Activated T-helper 1 cell treated with anti-CD3 and anti-CD28 coated beads, Interleukin-12 subunit alpha, Interleukin-12 subunit beta, Interleukin-2, Interleukin-4 antibody, amounts not matched to agents 30 ng/mL and 10 ng/mL and 1 ng/mL, durations not matched to agents 14 hours and 24 hours and 36 hours (primary cell): ENCODE measurements at regions of chr4 and their contacts with region 1.

Region 1: GRCh38 chr4:3346146-3346545 is 53.3 kb downstream of the RGS12 start:
- DNase-seq: no peak
- H3K4me3 Mint-ChIP-seq: no peak overlapping the region
- H3K27ac Mint-ChIP-seq: no peak overlapping the region
- H3K4me1 Mint-ChIP-seq: peaks cover 4% of the 10 kb centered on the region
- H3K27me3 Mint-ChIP-seq: peaks cover 5% of the 10 kb centered on the region

Region 2: DNA sequence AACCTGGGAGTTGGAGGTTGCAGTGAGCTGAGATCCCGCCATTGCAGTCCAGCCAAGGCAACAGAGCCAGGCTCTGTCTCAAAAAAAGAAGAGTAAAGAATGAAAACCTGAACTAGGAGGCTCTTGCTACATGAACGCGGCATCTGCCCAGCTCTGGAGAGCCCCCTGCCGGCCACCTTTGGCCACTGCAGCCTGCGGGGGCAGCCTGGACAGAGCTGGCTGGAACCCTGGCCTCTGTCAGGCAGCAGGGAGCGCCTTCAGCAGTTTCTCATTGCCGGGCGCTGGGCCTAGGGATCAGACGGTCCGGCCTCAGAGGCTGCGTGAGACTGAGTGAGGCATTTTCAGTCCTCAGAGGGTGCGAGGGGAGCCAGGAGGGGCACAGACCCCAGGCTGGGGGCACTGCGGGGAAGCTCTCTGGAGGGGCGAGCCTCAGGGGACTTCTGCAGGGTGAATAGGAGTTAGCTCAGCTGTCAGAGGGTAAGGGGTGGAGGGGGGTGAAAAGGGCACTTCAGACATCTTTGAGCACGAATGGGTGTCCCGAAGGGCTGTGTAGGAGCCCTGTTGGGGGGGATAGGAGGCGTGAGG is 134.5 kb after region 1 on chr4:
- intact Hi-C with region 1: loop called (anchors 1 kb)
- DNase-seq: peak; percentile 61
- H3K4me3 Mint-ChIP-seq: no peak overlapping the region
- H3K27ac Mint-ChIP-seq: no peak overlapping the region
- H3K4me1 Mint-ChIP-seq: no peaks in the 10 kb centered on the region
- H3K27me3 Mint-ChIP-seq: peaks cover 8% of the 10 kb centered on the region

Region 3: DNA sequence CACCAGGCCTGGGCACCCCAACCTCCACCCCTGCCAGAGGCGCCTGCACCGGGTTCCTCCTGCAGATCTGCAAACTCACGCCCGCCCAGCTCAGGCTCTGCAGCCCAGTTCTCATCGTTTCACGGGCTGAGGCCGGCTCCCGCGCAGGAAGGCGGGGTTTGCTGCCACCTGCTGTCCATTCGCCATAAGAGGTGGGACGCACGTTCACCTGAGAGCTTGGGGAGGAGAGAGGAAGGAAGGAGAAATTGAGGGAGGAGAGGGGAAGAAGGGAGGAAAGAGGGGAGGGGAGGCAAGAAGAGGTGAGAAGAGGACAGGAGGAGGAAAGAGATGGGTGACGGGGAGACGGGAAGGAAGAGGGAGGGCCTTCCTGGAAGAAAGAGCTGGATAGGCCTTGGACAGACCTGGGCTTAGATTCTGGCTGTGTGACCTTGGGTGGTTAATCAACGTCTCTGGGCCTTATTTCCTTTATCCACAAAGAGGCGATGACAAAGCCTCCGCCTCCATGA is 534.5 kb after region 1 on chr4:
- intact Hi-C with region 1: loop called (anchors 1 kb)
- DNase-seq: peak; percentile 40
- H3K4me3 Mint-ChIP-seq: no peak overlapping the region
- H3K27ac Mint-ChIP-seq: no peak overlapping the region
- H3K4me1 Mint-ChIP-seq: peaks cover 5% of the 10 kb centered on the region
- H3K27me3 Mint-ChIP-seq: peaks cover 37% of the 10 kb centered on the region